Breast epithelium (tissue), 4 donors: ENCODE measurements at regions of chr2 and their contacts with region 1.

Region 1: GRCh38 chr2:20507166-20507692 is 60.4 kb downstream of the RHOB start:
- DNase-seq: no peak
- H3K4me3 ChIP-seq: no peak overlapping the region
- H3K27ac ChIP-seq: no peak overlapping the region
- H3K4me1 ChIP-seq: peaks cover 0 to 5% of the 10 kb centered on the region in 2 donors
- H3K27me3 ChIP-seq: no peaks in the 10 kb centered on the region
- CTCF ChIP-seq: no peak
- POLR2A ChIP-seq: no peak

Region 2: GRCh38 chr2:20411361-20411894 is 95.8 kb before region 1 on chr2:
- intact Hi-C with region 1: no loop called
- DNase-seq: peak; percentile 69 to 86
- H3K4me3 ChIP-seq: no peak overlapping the region
- H3K27ac ChIP-seq: no peak overlapping the region
- H3K4me1 ChIP-seq: no peaks in the 10 kb centered on the region
- H3K27me3 ChIP-seq: no peaks in the 10 kb centered on the region
- CTCF ChIP-seq: peak; percentile 43 to 72 (median 67)
- POLR2A ChIP-seq: no peak

Region 3: GRCh38 chr2:20474757-20475566 is 32.3 kb before region 1 on chr2:
- intact Hi-C with region 1: loop called (anchors 1 kb)
- DNase-seq: peak in 1 of 2 donors; percentile 15
- H3K4me3 ChIP-seq: no peak overlapping the region
- H3K27ac ChIP-seq: peak overlapping the region; percentile 50 to 62
- H3K4me1 ChIP-seq: no peaks in the 10 kb centered on the region
- H3K27me3 ChIP-seq: no peaks in the 10 kb centered on the region
- CTCF ChIP-seq: no peak
- POLR2A ChIP-seq: no peak

Region 4: DNA sequence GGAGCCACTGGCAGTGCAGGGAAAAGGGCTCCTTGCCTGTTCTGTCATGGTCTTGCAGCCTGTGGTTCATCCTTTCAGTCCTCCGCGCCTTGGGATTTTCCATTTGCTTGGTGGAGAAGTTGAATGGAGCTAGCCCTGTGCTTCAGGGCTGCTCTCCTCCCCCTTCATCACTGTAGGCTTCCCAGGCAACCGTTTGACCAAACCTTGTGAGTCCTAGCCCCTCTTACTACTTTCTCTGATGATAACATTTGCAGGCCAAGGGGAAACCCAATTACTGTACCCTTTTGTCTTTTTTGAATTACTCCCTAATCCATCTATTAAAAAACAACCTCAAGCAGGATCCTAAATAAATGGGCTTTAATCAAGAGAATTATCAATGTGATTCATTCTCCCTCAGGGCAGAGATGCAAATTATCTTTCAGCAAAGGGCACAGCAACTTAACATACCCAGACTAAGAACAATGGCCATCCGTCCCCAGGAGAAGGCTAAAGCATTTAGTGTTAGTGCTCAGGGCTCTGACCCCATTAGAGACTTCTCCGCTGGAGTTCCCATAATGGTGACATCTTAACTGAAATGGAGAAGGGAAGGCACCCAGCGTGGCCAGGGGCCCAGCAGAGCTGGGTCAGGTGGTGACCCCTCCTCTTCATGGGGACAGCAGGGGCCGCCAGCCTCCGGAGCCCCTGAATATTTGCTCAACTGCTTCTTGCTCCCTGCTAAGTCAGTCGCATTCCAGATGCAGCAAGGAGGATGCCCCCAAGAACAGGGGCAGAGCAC is 19.6 kb before region 1 on chr2:
- intact Hi-C with region 1: loop called (anchors 1 kb)
- DNase-seq: no peak
- H3K4me3 ChIP-seq: no peak overlapping the region
- H3K27ac ChIP-seq: no peak overlapping the region
- H3K4me1 ChIP-seq: peaks cover 0 to 13% of the 10 kb centered on the region in 2 donors
- H3K27me3 ChIP-seq: no peaks in the 10 kb centered on the region
- CTCF ChIP-seq: no peak
- POLR2A ChIP-seq: no peak

Region 5: DNA sequence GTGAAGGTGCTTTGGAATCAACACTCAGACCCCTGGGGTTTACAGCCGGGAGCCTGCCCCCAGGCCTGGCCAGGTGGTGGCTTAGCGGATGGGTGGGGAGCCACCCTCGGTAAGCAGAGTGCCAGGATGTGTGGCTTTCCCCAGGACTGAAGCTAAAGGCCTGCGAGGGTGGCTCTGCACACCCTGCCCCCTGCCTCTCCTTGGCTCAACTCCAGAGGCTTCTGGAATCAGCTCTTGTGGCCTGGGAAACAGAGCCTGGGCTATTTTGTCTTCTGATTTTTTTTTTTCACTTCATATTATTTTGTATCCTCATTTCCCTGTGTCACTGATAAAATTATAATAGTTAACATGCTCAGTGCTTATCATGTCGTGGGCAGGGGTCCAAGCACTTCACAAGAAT is 19.5 kb after region 1 on chr2:
- intact Hi-C with region 1: loop called (anchors 1 kb)
- DNase-seq: no peak
- H3K4me3 ChIP-seq: no peak overlapping the region
- H3K27ac ChIP-seq: peak overlapping the region in 1 of 2 donors; percentile 54
- H3K4me1 ChIP-seq: peaks cover 7% of the 10 kb centered on the region in 2 donors
- H3K27me3 ChIP-seq: no peaks in the 10 kb centered on the region
- CTCF ChIP-seq: no peak
- POLR2A ChIP-seq: no peak